ENCODE measurements at regions of chr10 and their contacts with region 1.

Region 1: DNA sequence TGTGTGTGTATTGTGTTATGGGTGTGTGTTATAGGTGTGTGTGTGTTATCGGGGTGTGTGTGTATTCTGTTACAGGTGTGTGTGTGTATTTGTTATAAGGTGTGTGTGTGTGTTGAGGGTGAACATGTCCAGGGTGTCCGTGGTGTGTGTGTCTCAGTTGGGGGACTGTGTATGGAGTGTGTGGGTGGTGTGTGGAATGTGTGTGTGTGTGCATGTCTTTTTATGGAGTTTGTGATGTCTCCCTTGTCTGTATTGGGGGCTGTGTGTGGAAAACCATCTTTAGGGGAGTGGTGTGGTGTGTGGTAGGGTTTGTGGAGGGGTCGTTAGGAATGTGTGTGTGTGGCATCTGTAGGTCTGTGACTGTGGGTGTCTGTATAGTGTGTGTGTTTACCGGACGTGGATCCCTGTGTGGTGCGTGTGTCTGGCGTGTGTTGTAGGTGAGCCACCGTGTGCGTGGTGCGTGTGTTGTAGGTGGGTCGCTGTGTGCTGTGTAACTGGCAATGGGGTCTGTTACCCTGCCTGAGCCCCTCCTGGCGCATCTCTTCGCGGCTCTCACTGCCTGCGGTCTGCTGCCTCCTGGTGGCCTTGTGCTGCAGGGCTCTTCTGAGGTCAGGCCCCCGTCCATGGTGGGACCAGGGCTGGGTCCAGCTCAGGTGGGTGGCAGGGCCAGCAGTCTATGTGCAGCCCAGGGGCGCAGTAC is 61.7 kb downstream of the PALD1 start:
- DNase-seq: no peak
- H3K4me3 ChIP-seq: no peak overlapping the region
- H3K27ac ChIP-seq: no peak overlapping the region
- H3K4me1 ChIP-seq: no peaks in the 10 kb centered on the region
- H3K27me3 ChIP-seq: no peaks in the 10 kb centered on the region
- CTCF ChIP-seq: peak in 3 of 4 experiments; percentile 35 to 60 (median 56)
- POLR2A ChIP-seq: no peak

Region 2: DNA sequence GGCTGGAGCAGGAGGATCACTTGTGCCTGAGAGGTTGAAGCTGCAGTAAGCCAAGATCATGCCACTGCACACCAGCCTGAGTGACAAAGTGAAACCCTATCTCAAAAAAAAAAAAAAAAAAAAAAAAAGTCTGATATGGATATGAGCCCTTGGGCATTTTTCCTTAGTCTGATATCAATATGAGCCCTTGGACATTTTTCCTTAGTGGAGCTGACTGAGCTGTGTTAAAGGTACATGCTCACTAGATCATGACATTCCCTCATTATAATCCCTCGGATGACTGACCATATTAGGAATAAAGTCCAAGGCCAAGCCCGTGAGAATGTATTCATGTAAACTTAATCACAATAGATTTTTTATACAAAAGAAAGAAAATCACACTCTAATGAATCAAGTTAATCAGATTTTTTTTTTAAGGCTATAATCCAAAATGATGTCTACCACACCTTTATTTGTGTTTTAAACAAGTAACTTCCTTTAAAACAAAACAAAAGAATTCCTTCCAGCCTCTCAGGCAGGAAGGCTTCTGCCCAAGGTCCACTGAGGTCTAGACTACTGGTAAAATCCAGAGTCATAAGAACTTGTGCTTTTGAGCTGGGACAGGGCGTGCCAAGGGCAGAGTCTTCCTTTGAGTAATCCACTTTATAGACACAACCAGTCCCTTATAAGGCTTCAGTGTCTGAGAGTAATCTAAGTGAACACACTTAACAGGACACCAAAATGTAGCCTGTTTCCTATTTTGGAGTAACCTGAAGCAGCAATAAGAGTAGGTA is 312.5 kb before region 1 on chr10:
- intact Hi-C with region 1: loop called (anchors 10 kb)
- DNase-seq: no peak
- H3K4me3 ChIP-seq: no peak overlapping the region
- H3K27ac ChIP-seq: peak overlapping the region; percentile 2 to 33
- H3K4me1 ChIP-seq: peaks cover 4% of the 10 kb centered on the region
- H3K27me3 ChIP-seq: no peaks in the 10 kb centered on the region
- CTCF ChIP-seq: no peak
- POLR2A ChIP-seq: no peak

Region 3: DNA sequence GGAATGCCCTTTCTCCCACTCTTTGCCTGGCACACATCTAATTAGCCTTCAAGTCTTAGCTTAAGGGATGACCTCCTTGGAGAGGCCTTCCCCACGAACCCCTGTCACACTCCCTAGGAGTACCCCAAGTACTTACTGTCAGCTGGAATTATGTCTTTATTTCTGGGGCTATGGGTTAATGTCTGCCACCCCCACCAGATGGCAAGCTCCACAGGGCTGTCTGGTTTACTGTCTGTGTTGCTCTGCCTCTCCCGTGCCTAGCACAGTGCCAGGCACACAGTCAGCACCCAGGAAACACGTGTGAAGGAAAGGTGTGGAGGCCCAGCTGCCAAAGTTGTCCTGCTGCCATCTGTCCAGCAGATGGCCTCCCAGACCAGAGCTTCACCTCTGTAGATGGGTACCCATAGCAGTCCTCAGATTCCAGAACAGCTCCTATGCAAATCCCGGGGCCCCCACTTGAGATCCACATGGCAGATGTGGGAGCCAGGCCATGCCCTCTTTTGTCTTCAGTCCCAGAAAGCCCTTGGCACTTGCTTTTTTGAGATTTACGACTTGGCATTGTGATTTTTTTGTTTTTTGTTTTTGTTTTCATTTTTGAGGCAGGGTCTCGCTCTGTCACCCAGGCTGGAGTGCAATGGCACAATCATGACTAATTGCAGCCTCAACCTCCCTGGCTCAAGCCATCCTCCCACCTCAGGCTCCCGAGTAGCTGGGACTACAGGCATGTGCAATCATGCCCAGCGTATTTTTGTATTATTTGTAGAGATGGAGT is 78.8 kb before region 1 on chr10:
- intact Hi-C with region 1: loop called (anchors 2 kb)
- DNase-seq: peak; percentile 20
- H3K4me3 ChIP-seq: no peak overlapping the region
- H3K27ac ChIP-seq: no peak overlapping the region
- H3K4me1 ChIP-seq: no peaks in the 10 kb centered on the region
- H3K27me3 ChIP-seq: no peaks in the 10 kb centered on the region
- CTCF ChIP-seq: peak; percentile 30 to 76 (median 63)
- POLR2A ChIP-seq: no peak

Region 4: GRCh38 chr10:70672165-70673042 is 132.2 kb after region 1 on chr10 and contains the start of gene ADAMTS14:
- intact Hi-C with region 1: no loop called
- DNase-seq: no peak
- H3K4me3 ChIP-seq: peak within 1 kb of the TSS; percentile 20 to 23
- H3K27ac ChIP-seq: no peak within 1 kb of the TSS
- H3K4me1 ChIP-seq: no peaks in the 10 kb centered on the region
- H3K27me3 ChIP-seq: no peaks in the 10 kb centered on the region
- CTCF ChIP-seq: no peak
- POLR2A ChIP-seq: no peak
- total RNA-seq, gene ADAMTS14: 0.28 TPM in 1 of 2 donors, not detected in the other

Region 5: GRCh38 chr10:70931168-70931815 is 391.1 kb after region 1 on chr10:
- intact Hi-C with region 1: no loop called
- DNase-seq: peak; percentile 47
- H3K4me3 ChIP-seq: no peak overlapping the region
- H3K27ac ChIP-seq: no peak overlapping the region
- H3K4me1 ChIP-seq: no peaks in the 10 kb centered on the region
- H3K27me3 ChIP-seq: no peaks in the 10 kb centered on the region
- CTCF ChIP-seq: no peak
- POLR2A ChIP-seq: no peak

Measured in prostate gland (tissue), 2 donors.